ENCODE measurements at regions of chr17 and their contacts with region 1.

Region 1: GRCh38 chr17:29148790-29149430 is 31.3 kb downstream of the MYO18A start:
- DNase-seq: peak; percentile 96 to 99 (median 98)
- ATAC-seq: peak; percentile 98
- H3K4me3 ChIP-seq: peak overlapping the region; percentile 53
- H3K27ac ChIP-seq: peak overlapping the region; percentile 86
- H3K4me1 ChIP-seq: peaks cover 11% of the 10 kb centered on the region
- H3K27me3 ChIP-seq: no peaks in the 10 kb centered on the region

Region 2: GRCh38 chr17:29091604-29092289 is 57.2 kb before region 1 on chr17:
- intact Hi-C with region 1: no loop called
- DNase-seq: peak in 2 of 3 donors; percentile 33 to 41
- ATAC-seq: no peak
- H3K4me3 ChIP-seq: no peak overlapping the region
- H3K27ac ChIP-seq: no peak overlapping the region
- H3K4me1 ChIP-seq: no peaks in the 10 kb centered on the region
- H3K27me3 ChIP-seq: no peaks in the 10 kb centered on the region

Region 3: DNA sequence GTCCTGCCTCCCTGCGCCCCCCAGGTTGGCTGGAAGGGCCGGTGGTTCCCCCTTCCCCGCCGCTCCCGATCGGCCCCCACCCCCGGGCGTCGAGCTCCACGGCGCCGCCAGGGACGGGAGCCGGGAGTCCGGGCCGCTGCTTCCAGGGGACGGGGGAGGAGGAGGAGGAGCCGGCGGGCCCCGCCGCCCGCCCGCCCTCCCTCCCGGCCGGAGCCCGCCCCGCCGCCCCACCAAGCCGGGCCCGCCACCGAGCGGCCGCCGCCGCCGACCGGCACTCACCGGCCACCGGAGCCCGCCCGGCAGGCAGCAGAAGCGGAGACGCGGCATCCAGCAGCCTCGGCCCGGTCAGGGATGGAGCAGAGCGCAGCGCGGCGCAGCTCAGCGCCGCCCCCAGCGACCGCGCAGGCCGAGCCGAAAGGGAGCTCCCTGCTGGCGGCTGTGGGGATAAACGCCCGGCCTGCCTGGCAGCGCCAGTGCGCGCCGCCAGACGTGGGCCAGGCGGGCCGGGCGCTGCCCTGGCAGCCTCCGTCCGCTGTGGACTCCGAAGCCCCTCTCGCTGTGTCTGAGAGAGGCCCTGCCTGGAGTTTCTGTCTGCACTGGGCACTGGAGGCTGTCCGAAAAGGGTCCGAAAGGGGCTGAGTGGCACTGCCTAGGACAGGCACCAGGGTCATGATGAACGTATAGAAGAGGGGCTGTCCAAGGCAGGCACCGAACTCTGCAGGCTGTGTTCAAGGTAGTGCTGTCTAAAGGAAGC is 31.3 kb after region 1 on chr17 and contains the start of gene MYO18A:
- intact Hi-C with region 1: loop called in 2 of 4 experiments (anchors 5 kb)
- DNase-seq: peak; percentile 82 to 93 (median 93)
- ATAC-seq: peak; percentile 88 to 90
- H3K4me3 ChIP-seq: peak within 1 kb of the TSS; percentile 82
- H3K27ac ChIP-seq: peak within 1 kb of the TSS; percentile 87
- H3K4me1 ChIP-seq: peaks cover 10% of the 10 kb centered on the region
- H3K27me3 ChIP-seq: no peaks in the 10 kb centered on the region
- total RNA-seq, gene MYO18A: 206 to 312 (median 277) TPM

Region 4: DNA sequence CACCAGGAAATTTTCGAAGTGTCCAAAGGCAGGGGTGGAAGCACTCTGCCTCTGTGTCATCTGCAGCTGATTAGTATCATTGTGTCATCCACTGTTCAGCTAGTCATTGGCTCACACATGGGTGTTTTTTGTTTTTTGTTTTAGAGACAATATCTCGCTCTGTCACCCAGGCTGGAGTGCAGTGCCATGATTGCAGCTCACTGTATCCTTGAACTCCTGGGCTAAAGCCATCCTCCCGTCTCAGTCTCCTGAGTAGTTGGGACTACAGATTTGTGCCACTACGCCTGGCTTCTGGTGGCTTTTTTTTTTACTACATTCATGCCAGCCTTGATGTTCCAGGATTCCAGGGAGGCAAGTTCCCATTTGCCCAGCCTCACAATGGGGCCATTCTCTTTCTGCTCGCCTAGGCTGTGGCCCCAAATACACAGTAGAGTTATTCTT is 63.8 kb after region 1 on chr17:
- intact Hi-C with region 1: loop called (anchors 5 kb)
- DNase-seq: no peak
- ATAC-seq: no peak
- H3K4me3 ChIP-seq: no peak overlapping the region
- H3K27ac ChIP-seq: no peak overlapping the region
- H3K4me1 ChIP-seq: peaks cover 4% of the 10 kb centered on the region
- H3K27me3 ChIP-seq: no peaks in the 10 kb centered on the region

Region 5: GRCh38 chr17:29219378-29220047 is 70.6 kb after region 1 on chr17:
- intact Hi-C with region 1: loop called (anchors 5 kb)
- DNase-seq: peak; percentile 77 to 88 (median 83)
- ATAC-seq: peak; percentile 91 to 93
- H3K4me3 ChIP-seq: no peak overlapping the region
- H3K27ac ChIP-seq: no peak overlapping the region
- H3K4me1 ChIP-seq: peaks cover 2% of the 10 kb centered on the region
- H3K27me3 ChIP-seq: no peaks in the 10 kb centered on the region

Region 6: DNA sequence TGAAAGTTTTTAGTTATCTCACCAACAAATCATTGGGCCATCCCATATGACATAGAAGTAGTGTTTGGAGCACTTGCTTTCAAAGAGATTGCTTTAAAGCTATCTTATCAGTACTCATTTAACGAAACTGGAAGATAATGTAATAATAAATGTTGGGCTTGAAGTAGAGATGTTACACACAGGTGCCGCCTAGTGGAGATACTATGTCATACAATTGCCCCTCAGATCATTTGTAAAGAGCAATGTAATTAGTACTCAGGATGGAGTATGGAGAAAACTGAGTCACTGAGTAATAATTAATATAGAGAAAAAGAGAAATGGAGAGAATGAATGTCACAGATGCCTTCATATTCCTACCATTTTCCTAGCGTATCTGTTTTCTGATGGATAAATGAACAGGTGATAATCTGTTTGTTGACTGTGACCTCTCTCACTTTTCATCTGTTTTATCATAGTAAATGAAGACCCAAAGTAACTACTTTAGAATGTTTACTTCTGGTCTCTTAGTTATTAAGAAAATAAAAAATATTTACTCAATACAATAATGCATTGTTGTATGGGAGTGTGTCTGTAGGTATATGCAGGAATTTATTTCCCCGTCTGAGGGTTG is 872.9 kb after region 1 on chr17:
- intact Hi-C with region 1: no loop called
- DNase-seq: no peak
- ATAC-seq: no peak
- H3K4me3 ChIP-seq: no peak overlapping the region
- H3K27ac ChIP-seq: no peak overlapping the region
- H3K4me1 ChIP-seq: no peaks in the 10 kb centered on the region
- H3K27me3 ChIP-seq: no peaks in the 10 kb centered on the region